MCF 10A (cell line): ENCODE measurements at regions of chr11 and their contacts with region 1.

Region 1: DNA sequence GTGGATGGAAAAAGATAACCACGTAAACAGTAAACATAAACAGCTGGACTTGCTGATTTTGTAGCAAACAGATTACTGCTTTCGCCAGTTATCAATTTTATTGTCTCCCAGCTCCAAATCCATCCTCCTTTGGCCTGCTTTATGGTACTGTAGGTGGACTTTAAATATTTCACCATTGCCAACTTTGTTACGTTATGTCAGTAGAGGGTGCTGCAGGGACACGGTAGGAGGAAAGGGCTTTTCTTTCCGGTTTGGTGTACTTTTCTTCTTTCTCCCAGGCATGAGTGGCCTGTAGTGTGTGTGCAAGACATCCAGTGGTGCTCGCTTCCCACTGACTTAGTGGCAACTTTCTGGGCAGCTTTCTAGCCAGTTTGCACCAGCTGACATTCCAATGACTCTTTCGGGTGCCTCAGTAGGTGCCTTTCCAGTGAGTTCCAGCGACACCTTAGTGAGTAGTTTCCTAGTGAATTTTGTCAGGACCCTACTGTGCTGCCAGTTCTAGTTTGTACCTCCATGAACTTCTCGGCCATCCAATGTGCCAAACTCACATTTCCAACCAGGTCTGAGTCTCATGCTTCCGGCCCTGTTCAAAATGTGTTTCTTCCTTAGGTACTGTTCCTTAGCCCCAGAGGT is 267.6 kb upstream of the TENM4 start:
- DNase-seq: peak; percentile 70
- H3K4me3 Mint-ChIP-seq: no peak overlapping the region
- H3K27ac Mint-ChIP-seq: no peak overlapping the region
- H3K4me1 Mint-ChIP-seq: no peaks in the 10 kb centered on the region
- H3K27me3 Mint-ChIP-seq: no peaks in the 10 kb centered on the region
- CTCF ChIP-seq: peak; percentile 71

Region 2: DNA sequence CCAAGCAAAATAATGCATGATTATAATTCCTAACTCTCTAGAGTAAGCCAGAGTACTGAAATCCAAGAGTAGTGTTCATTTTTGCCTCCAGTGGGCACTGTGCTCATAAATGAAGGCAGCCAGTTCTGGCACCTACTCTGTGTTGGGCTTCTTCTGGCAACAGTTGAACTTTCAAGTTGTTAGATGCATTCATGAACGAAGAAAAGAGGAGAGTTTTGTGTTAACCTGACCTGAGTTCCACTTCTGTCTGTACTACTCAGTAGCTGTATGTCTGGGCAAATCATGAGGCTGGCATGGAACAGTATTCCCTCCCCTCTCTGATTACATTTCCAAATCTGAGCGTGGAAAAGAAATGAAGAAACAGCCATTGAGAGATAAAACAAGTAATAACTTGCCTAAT is 247.3 kb before region 1 on chr11:
- CTCF ChIA-PET with region 1: no interaction called
- POLR2A ChIA-PET with region 1: no interaction called
- intact Hi-C with region 1: loop called (anchors 10 kb)
- DNase-seq: peak; percentile 63
- H3K4me3 Mint-ChIP-seq: peak overlapping the region; percentile 12
- H3K27ac Mint-ChIP-seq: peak overlapping the region; percentile 37
- H3K4me1 Mint-ChIP-seq: peaks cover 6% of the 10 kb centered on the region
- H3K27me3 Mint-ChIP-seq: no peaks in the 10 kb centered on the region
- CTCF ChIP-seq: peak; percentile 51

Region 3: GRCh38 chr11:79720115-79720514 is 11.7 kb after region 1 on chr11:
- CTCF ChIA-PET with region 1: interaction called, 15 read pairs
- POLR2A ChIA-PET with region 1: no interaction called
- intact Hi-C with region 1: no loop called
- DNase-seq: no peak
- H3K4me3 Mint-ChIP-seq: no peak overlapping the region
- H3K27ac Mint-ChIP-seq: no peak overlapping the region
- H3K4me1 Mint-ChIP-seq: peaks cover 6% of the 10 kb centered on the region
- H3K27me3 Mint-ChIP-seq: no peaks in the 10 kb centered on the region
- CTCF ChIP-seq: no peak

Region 4: DNA sequence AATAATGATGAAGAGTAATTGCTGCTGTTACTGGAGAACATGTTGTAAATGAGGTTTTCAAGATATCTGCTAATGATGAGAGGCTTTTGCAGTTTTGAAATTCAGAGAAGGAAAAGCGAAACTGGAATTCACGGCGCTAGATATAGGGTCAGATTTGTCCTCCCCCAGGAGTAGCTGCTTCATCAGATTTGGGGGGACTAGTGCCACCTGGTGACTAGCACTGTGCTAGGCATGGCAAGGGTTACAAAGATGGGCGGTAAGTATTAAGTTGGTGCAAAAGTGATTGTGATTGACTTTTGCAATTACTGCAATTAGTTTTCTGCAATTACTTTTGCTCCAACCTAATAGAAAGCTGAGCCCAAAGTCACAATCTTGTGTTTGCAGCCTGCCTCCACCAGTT is 612.3 kb after region 1 on chr11:
- CTCF ChIA-PET with region 1: interaction called, 3 read pairs
- POLR2A ChIA-PET with region 1: no interaction called
- intact Hi-C with region 1: loop called (anchors 2 kb)
- DNase-seq: peak; percentile 51
- H3K4me3 Mint-ChIP-seq: no peak overlapping the region
- H3K27ac Mint-ChIP-seq: no peak overlapping the region
- H3K4me1 Mint-ChIP-seq: no peaks in the 10 kb centered on the region
- H3K27me3 Mint-ChIP-seq: no peaks in the 10 kb centered on the region
- CTCF ChIP-seq: peak; percentile 30

Region 5: GRCh38 chr11:81237139-81237538 is 1528.7 kb after region 1 on chr11:
- CTCF ChIA-PET with region 1: interaction called, 24 read pairs
- POLR2A ChIA-PET with region 1: interaction called, 4 read pairs
- intact Hi-C with region 1: loop called (anchors 1 kb)
- DNase-seq: peak; percentile 65
- H3K4me3 Mint-ChIP-seq: no peak overlapping the region
- H3K27ac Mint-ChIP-seq: no peak overlapping the region
- H3K4me1 Mint-ChIP-seq: no peaks in the 10 kb centered on the region
- H3K27me3 Mint-ChIP-seq: peaks cover 14% of the 10 kb centered on the region
- CTCF ChIP-seq: peak; percentile 59